ENCODE measurements at regions of chr18 and their contacts with region 1.

Region 1: DNA sequence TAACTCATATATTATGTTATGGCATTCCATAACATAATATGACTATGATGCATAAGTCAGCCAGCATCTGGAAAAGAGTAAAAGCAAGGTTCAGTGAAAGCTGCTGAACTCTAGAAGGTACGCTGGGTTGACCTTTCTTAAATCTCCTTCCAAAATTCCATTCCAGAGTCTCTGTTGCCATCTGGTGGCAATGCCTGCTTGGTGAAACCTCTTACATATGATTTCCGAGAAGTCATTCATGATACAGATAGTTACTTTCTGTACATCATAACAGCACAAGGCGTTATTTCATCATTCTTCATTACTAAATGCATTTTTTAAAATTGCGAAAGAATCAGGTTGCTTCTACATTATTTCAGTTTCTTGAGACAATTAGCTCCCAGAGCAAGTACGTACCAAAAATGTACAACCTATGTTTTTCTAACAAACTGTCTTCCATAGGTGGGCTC is 7.0 kb upstream of the EPG5 start:
- DNase-seq: peak; percentile 57 to 84 (median 69)
- H3K4me3 ChIP-seq: no peak overlapping the region
- H3K27ac ChIP-seq: no peak overlapping the region
- H3K4me1 ChIP-seq: no peaks in the 10 kb centered on the region
- H3K27me3 ChIP-seq: no peaks in the 10 kb centered on the region
- CTCF ChIP-seq: peak; percentile 65 to 92 (median 80)
- POLR2A ChIP-seq: no peak

Region 2: DNA sequence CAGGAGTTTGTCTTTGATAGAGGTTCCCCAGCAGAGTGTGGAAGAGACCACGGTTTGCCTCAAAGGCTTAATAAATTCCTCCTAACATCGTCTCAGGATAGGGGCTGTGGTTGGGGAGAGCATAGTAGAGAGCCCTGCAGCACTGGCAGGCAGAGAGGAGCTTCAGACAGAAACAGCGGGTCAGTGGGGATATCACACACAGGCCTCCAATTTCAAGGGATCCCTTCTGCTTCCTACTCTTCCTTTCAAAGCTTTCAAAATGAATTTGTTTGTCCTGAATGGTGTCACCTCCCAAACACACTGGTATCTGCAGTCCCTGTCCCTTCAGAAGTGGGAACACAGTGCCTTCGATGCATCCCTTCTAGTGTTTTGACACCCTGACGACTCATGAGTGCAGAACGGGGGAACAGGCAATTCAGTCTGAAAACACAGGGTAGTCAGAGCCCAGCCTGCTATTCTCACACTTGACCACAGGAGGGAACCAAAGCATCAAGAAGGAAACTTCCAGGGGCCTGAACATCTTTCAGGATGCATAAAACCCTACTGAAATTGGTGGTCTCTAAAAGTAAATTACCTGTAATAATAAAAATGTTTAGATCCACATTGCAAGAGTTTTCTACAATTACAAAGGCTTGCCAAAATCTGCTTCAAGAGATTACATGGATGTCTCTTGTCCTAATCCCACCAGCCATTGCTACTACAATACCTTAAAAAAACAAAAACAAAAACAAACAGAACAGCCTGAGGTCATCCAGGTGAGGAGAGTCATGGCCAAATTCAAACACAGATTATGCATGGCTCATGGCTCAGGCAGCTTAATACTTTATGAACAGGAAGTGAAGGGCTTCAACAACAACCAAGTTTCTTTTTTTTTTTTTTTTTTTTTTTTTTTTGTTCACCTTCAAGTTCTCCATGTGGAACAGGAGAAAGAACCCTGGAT is 309.0 kb before region 1 on chr18:
- intact Hi-C with region 1: loop called in 1 of 2 experiments (anchors 10 kb)
- DNase-seq: peak; percentile 52 to 86 (median 72)
- H3K4me3 ChIP-seq: no peak overlapping the region
- H3K27ac ChIP-seq: peak overlapping the region in 2 of 5 donors; percentile 4 to 76
- H3K4me1 ChIP-seq: peaks cover 22 to 28% of the 10 kb centered on the region in 2 donors
- H3K27me3 ChIP-seq: no peaks in the 10 kb centered on the region
- CTCF ChIP-seq: peak; percentile 91 to 98 (median 95)
- POLR2A ChIP-seq: no peak

Region 3: DNA sequence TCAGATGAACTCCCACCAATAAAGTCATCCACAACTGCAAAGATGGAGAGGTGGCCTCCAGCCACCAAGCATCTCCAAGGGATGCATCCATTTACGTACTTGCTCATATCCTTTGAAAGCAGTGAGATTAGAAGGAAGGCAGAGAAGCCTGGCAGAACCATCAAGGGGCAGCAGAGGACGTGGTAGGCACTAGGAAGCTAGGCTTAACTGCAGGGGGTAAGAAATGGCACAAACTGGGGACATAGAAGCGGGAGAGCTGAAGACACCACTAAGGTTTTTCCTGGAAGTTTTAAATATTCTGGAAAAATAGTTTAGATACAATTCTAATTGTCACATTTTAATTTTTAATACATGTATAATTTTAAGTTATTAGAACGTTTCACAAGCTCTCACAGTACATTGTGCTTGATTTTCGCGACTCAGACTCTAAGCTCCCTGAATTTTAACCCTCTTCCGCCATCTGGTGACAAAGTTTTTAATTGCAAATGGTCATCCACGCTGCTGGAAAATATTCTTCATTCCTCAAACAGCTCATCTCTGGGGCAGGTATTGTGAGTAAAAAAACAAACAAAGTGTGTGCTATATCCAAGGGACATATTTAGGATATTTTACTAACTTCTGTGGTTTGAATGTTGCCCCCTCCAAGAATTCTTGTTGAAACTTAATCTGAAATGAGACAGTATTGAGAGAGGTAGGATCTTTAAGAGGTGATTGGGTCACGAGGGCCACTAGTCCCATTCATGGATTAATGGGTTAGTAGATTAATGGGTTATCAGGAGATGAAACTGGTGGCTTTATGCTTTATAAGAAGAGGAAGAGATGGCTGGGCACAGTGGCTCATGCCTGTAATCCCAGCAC is 99.6 kb after region 1 on chr18:
- intact Hi-C with region 1: loop called (anchors 5 to 10 kb)
- DNase-seq: peak; percentile 34 to 73 (median 69)
- H3K4me3 ChIP-seq: no peak overlapping the region
- H3K27ac ChIP-seq: no peak overlapping the region
- H3K4me1 ChIP-seq: peaks cover 8 to 15% of the 10 kb centered on the region in 2 donors
- H3K27me3 ChIP-seq: no peaks in the 10 kb centered on the region
- CTCF ChIP-seq: peak; percentile 58 to 76 (median 72)
- POLR2A ChIP-seq: no peak